T-cell (primary cell): ENCODE measurements at regions of chr1 and their contacts with region 1.

Region 1: GRCh38 chr1:153688276-153688675 is 9.8 kb downstream of the NPR1 start:
- DNase-seq: no peak
- ATAC-seq: no peak
- H3K4me3 ChIP-seq: no peak overlapping the region
- H3K4me3 Mint-ChIP-seq: no peak overlapping the region
- H3K27ac ChIP-seq: no peak overlapping the region
- H3K27ac Mint-ChIP-seq: no peak overlapping the region
- H3K4me1 ChIP-seq: peaks cover 0 to 13% of the 10 kb centered on the region in 2 experiments
- H3K4me1 Mint-ChIP-seq: peaks cover 6 to 9% (median 8%) of the 10 kb centered on the region in 3 donors
- H3K27me3 ChIP-seq: peaks cover 0 to 40% of the 10 kb centered on the region in 2 experiments
- H3K27me3 Mint-ChIP-seq: peaks cover 8 to 12% of the 10 kb centered on the region in 2 donors

Region 2: GRCh38 chr1:153617675-153618074 is 70.6 kb before region 1 on chr1:
- CTCF ChIA-PET with region 1: no interaction called
- POLR2A ChIA-PET with region 1: no interaction called
- DNase-seq: peak in 28 of 35 experiments; percentile 7 to 76 (median 55)
- ATAC-seq: peak in 2 of 4 experiments; percentile 82 to 94
- H3K4me3 ChIP-seq: no peak overlapping the region
- H3K4me3 Mint-ChIP-seq: no peak overlapping the region
- H3K27ac ChIP-seq: no peak overlapping the region
- H3K27ac Mint-ChIP-seq: no peak overlapping the region
- H3K4me1 ChIP-seq: peaks cover 0 to 6% of the 10 kb centered on the region in 2 experiments
- H3K4me1 Mint-ChIP-seq: peaks cover 5 to 7% (median 5%) of the 10 kb centered on the region in 3 donors
- H3K27me3 ChIP-seq: peaks cover 0 to 20% of the 10 kb centered on the region in 2 experiments
- H3K27me3 Mint-ChIP-seq: no peaks in the 10 kb centered on the region

Region 3: DNA sequence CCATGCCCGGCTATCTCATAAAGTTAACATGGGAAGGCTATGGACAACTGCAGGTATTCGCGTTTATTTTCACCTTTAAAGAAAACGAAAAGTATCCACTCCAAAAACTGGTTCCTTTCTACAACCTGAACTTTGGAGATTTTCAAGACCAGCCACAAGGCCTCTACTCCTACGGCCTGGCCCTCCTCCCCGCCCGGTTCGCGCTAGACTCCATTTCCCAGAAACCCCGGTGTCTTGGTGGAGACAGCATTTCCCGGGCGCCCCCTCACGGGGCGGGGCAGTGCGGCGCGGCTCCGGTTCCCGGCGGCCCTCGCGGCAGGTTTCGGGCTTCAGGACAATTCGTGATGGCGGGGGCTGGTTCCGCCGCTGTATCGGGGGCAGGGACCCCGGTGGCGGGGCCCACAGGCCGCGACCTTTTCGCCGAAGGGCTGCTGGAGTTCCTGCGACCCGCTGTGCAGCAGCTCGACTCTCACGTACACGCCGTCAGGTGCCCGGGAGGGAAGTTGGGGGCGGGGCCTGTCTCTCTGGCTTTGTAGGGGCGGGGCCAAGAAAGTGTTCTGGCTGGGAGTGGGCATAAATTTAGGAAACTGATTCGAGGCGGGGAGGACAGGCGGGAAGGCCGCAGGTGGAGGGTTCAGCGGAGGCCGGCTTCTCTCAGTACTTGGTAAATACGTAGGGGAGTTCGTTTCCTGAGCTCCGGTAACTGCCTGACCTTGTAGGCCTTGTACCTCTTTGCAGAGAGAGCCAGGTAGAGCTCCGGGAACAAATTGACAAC is 29.7 kb before region 1 on chr1 and contains the start of gene SNAPIN:
- CTCF ChIA-PET with region 1: no interaction called
- POLR2A ChIA-PET with region 1: interaction called in 1 of 2 experiments, 10 read pairs
- DNase-seq: peak; percentile 73 to 93 (median 84)
- ATAC-seq: peak; percentile 95 to 99 (median 98)
- H3K4me3 ChIP-seq: peak within 1 kb of the TSS; percentile 79 to 80
- H3K4me3 Mint-ChIP-seq: peak within 1 kb of the TSS; percentile 92 to 94 (median 94)
- H3K27ac ChIP-seq: peak within 1 kb of the TSS; percentile 61
- H3K27ac Mint-ChIP-seq: peak within 1 kb of the TSS; percentile 93 to 94
- H3K4me1 ChIP-seq: peaks cover 5 to 22% of the 10 kb centered on the region in 2 experiments
- H3K4me1 Mint-ChIP-seq: peaks cover 16 to 18% (median 17%) of the 10 kb centered on the region in 3 donors
- H3K27me3 ChIP-seq: no peaks in the 10 kb centered on the region
- H3K27me3 Mint-ChIP-seq: no peaks in the 10 kb centered on the region
- total RNA-seq, gene SNAPIN: 16.1 to 29.8 (median 26.6) TPM